ENCODE measurements at regions of chr11 and their contacts with region 1.

Region 1: GRCh38 chr11:28495333-28495732 is 387.1 kb downstream of the METTL15 start:
- DNase-seq: no peak
- H3K4me3 Mint-ChIP-seq: no peak overlapping the region
- H3K27ac Mint-ChIP-seq: no peak overlapping the region
- H3K4me1 Mint-ChIP-seq: no peaks in the 10 kb centered on the region
- H3K27me3 Mint-ChIP-seq: no peaks in the 10 kb centered on the region

Region 2: DNA sequence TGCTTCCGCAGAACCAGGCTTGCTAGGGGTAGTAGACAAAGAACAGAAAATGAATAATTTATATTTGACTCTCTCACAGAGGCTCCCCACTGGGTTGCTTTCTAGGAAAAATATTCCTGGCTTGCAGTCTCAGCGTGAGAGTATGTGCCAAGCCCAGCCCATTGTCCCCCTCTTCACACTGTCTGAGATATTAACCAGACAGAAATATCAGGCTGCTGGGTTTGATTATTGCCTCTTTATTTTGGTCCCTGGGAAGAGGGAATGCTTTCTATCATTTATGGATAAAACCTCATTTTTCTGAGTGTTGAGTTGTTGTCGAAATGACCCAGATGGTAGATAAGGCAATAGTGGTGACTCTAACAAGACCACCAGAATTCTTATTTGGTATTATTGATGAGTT is 19.3 kb before region 1 on chr11:
- CTCF ChIA-PET with region 1: no interaction called
- intact Hi-C with region 1: no loop called
- DNase-seq: no peak
- H3K4me3 Mint-ChIP-seq: no peak overlapping the region
- H3K27ac Mint-ChIP-seq: no peak overlapping the region
- H3K4me1 Mint-ChIP-seq: no peaks in the 10 kb centered on the region
- H3K27me3 Mint-ChIP-seq: no peaks in the 10 kb centered on the region

Region 3: GRCh38 chr11:28517621-28518020 is 22.3 kb after region 1 on chr11:
- CTCF ChIA-PET with region 1: no interaction called
- intact Hi-C with region 1: loop called (anchors 1 kb)
- DNase-seq: no peak
- H3K4me3 Mint-ChIP-seq: no peak overlapping the region
- H3K27ac Mint-ChIP-seq: no peak overlapping the region
- H3K4me1 Mint-ChIP-seq: no peaks in the 10 kb centered on the region
- H3K27me3 Mint-ChIP-seq: no peaks in the 10 kb centered on the region

Measured in activated naive CD4-positive, alpha-beta T cell treated with anti-CD3 and anti-CD28 coated beads for 36 hours (primary cell).